AG04449 (cell line): ENCODE measurements at regions of chr15 and their contacts with region 1.

Region 1: DNA sequence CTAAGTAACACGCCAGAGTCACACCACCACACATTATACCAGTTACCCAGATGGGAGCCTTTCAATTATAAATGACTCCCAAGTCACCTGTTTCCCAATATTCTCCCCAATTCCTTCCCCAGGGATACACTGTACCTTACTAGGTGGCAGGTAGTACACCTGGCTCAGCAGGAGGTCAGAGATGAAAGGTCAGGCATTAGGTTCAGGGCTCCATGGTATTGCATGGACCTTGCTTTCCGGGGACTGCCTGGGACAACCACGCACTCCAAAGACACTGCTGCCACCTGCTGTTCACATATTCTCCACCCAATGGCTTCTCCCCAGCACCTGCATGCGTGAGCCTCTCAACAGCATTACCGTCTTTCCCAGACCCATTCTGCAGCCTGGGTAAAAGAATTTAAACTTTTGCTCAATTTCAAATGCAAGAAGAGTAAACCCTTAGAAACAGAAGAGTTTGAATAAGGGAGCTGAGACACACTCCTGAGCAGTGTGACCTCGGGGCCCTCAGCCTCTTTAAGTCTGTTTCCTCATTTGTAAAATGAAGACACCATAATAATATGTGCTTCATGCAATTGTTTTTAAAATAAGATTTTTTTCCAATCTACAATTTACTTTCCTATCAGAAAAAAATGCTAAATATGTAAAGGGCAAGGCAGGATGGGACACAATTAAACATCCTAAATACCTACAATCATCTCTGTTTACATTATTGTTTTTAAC is 28.0 kb upstream of the LACTB start:
- DNase-seq: no peak
- H3K4me3 ChIP-seq: no peak overlapping the region
- CTCF ChIP-seq: peak; percentile 87

Region 2: GRCh38 chr15:62758126-62758951 is 335.3 kb before region 1 on chr15:
- CTCF ChIA-PET with region 1: interaction called, 10 read pairs
- POLR2A ChIA-PET with region 1: no interaction called
- DNase-seq: peak; percentile 91
- H3K4me3 ChIP-seq: peak overlapping the region; percentile 15; the same call in 1 of the 2 replicates
- CTCF ChIP-seq: no peak

Region 3: DNA sequence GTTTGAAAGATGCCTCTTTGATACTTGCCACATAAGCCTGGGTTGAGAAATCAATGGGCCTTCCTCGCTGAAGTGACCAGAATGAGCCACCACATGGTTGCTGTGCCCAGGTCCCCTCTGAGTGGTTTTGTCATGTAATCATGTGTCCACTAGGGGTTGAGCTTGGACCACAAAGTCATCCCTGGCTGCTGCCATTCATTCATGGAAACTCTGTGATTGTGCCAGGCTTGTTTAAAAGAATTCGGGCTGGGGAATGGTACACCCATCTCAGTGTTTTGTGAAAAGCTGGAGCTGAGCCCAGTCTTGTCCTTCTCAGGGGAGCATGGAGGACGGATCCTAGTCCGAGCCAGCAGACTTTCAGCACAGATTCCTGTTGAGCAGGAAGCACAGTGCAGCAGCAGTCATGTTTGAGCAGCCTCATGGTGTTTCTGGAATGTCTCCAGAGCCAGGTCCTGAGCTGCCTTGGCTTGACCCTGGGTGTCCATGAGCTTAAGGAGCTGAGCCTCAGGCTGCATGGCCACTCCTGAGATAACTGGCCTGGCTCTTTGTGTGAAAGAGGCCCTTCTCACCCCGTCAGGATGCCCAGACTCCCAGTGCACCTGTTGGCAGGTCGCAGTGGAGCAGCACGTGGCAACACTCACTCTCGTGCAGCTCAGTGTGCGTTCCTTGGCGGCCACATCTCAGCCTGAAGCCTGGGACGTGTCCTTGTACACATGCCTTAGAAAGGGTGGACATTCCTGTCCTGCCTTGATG is 311.4 kb before region 1 on chr15:
- CTCF ChIA-PET with region 1: interaction called, 27 read pairs
- POLR2A ChIA-PET with region 1: interaction called, 4 read pairs
- DNase-seq: peak; percentile 70
- H3K4me3 ChIP-seq: no peak overlapping the region
- CTCF ChIP-seq: peak; percentile 76

Region 4: DNA sequence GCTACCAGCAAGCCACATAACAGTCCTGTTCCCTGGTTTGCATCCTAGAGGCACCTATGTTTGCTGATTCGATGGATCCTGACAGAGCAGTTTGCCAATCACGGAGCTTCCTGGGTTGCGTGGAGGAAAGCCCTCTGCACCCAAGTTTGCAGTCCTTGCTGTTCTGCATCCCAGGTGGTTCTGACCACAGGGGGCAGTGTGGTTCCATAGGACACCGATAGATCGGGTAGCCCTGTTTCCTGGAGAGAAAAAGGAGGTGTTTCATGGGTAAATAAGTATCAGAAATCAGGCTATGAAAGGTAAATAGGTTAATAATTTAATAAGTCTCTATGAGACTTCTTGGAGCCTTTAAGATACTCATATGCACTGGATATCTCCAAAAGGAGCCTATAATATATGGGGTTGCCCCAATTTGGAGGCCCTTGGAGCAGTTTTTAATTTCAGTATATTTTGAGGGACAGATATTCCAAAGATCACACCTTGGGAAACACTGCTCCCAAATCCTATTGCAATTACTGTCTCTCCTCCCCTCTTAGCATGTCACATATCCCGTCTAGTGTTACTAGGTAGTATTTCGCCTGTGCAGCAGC is 245.7 kb before region 1 on chr15:
- CTCF ChIA-PET with region 1: interaction called, 14 read pairs
- POLR2A ChIA-PET with region 1: interaction called, 3 read pairs
- DNase-seq: no peak
- H3K4me3 ChIP-seq: no peak overlapping the region
- CTCF ChIP-seq: peak; percentile 45

Region 5: GRCh38 chr15:63067976-63068743 is 25.5 kb before region 1 on chr15:
- CTCF ChIA-PET with region 1: interaction called, 10 read pairs
- POLR2A ChIA-PET with region 1: interaction called, 4 read pairs
- DNase-seq: no peak
- H3K4me3 ChIP-seq: no peak overlapping the region
- CTCF ChIP-seq: no peak

Region 6: DNA sequence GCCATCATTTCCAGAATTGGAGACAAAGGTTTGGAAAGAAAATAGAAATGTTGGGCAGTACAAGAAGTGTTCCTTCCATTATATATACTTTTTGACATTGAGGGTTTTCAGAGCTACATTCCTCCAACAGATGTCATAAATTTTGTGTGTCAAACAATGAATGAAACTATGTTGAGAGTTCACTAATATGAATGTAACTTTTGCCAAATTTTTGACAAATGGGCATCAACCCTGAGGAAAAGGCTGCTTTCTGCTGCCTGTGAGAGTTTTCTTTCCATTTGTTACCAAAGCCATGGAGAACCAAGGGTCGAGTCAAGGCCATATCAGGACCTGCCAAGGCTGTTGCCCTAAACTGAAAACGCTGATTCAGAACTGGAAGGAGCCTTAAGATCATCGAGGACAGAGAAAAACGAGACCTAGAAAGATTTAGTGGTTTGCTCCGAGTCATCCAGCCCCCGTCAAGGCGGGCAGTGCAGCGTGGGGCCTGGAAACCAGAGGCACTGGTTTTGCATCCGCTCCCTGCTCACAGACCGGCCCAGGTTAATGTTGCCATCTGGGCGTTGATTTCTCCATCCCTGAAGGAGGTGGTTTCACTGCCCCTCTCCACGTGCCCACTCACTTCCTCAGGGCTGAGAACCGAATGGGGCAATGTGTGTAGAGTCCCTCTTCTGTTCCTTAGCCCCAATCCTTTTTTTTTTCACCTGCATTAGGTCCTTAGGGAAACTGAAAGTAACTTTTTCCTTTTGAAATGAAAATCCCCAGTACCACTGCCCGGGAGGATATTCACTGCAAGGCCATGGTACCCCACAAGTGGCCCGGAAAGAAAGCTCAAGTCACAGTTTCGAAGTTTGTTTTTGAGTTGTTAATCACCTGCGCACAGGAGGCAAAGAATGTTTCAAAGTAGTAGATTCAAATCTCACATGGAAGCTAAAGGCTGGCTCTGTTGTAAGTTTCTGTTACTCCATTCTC is 18.3 kb before region 1 on chr15:
- CTCF ChIA-PET with region 1: interaction called, 15 read pairs
- POLR2A ChIA-PET with region 1: interaction called, 5 read pairs
- DNase-seq: no peak
- H3K4me3 ChIP-seq: no peak overlapping the region
- CTCF ChIP-seq: no peak

Region 7: DNA sequence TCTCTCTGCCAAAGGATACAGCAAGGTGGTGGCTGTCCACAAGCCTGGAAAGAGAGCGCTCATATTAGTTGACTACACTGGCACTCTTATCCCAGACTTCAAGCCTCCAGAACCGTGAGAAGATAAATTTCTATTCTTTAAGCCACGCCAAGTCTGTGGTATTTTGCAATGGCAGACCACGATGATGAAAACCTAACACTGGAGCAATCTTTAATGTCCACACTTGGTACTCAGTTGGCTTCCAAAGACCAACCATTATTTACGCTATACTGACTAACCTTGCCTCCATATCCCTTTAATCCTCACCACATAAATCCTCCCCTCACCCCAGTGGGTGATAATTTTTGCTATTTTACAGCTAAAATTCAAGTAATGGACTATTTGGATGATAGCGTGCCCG is 11.1 kb after region 1 on chr15:
- CTCF ChIA-PET with region 1: interaction called, 10 read pairs
- POLR2A ChIA-PET with region 1: interaction called, 5 read pairs
- DNase-seq: no peak
- H3K4me3 ChIP-seq: no peak overlapping the region
- CTCF ChIP-seq: no peak

Region 8: GRCh38 chr15:63146669-63147068 is 53.0 kb after region 1 on chr15:
- CTCF ChIA-PET with region 1: no interaction called
- POLR2A ChIA-PET with region 1: no interaction called
- DNase-seq: no peak
- H3K4me3 ChIP-seq: no peak overlapping the region
- CTCF ChIP-seq: no peak